Activated CD4-positive, alpha-beta T cell treated with anti-CD3 and anti-CD28 coated beads, Interleukin-2, amount 10 ng/mL, durations not matched to agents 24 days and 14 days (primary cell): ENCODE measurements at regions of chrX and their contacts with region 1.

Region 1: GRCh38 chrX:71618303-71618721 is at the start of gene CXCR3:
- DNase-seq: peak; percentile 91
- H3K4me3 Mint-ChIP-seq: peak within 1 kb of the TSS; percentile 94
- H3K27ac Mint-ChIP-seq: peak within 1 kb of the TSS; percentile 97
- H3K4me1 Mint-ChIP-seq: peaks cover 70% of the 10 kb centered on the region
- H3K27me3 Mint-ChIP-seq: no peaks in the 10 kb centered on the region
- total RNA-seq, gene CXCR3: 34.5 and 35.2 TPM in 2 replicates

Region 2: GRCh38 chrX:71365876-71366673 is 252.2 kb before region 1 on chrX and contains the start of gene TAF1:
- intact Hi-C with region 1: loop called (anchors 5 kb)
- DNase-seq: peak; percentile 96
- H3K4me3 Mint-ChIP-seq: peak within 1 kb of the TSS; percentile 98
- H3K27ac Mint-ChIP-seq: peak within 1 kb of the TSS; percentile 100
- H3K4me1 Mint-ChIP-seq: peaks cover 21% of the 10 kb centered on the region
- H3K27me3 Mint-ChIP-seq: no peaks in the 10 kb centered on the region
- total RNA-seq, gene TAF1: 46.7 and 47.8 TPM in 2 replicates

Region 3: GRCh38 chrX:71541210-71542022 is 76.9 kb before region 1 on chrX:
- intact Hi-C with region 1: loop called (anchors 1 kb)
- DNase-seq: peak; percentile 54
- H3K4me3 Mint-ChIP-seq: peak overlapping the region; percentile 100
- H3K27ac Mint-ChIP-seq: peak overlapping the region; percentile 95
- H3K4me1 Mint-ChIP-seq: peaks cover 41% of the 10 kb centered on the region
- H3K27me3 Mint-ChIP-seq: no peaks in the 10 kb centered on the region

Region 4: DNA sequence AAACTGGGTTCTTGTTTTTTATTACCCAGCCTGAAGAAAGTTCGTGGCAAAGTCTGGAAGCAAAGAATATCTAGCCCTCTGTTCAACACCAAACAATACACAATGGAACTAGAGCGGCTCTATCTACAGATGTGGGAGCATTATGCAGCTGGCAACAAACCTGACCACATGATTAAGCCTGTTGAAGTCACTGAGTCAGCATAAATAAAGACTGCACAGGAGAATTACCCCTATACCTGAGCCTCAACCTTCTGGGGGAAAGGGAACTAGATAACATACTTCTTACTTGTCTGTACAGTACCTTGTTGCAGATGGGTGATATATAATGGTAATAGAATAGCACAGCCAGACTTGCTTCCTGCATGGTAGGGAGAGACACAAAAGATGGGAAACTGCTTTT is 44.7 kb before region 1 on chrX:
- intact Hi-C with region 1: no loop called
- DNase-seq: no peak
- H3K4me3 Mint-ChIP-seq: no peak overlapping the region
- H3K27ac Mint-ChIP-seq: no peak overlapping the region
- H3K4me1 Mint-ChIP-seq: peaks cover 1% of the 10 kb centered on the region
- H3K27me3 Mint-ChIP-seq: no peaks in the 10 kb centered on the region

Region 5: GRCh38 chrX:71606536-71607216 is 11.6 kb before region 1 on chrX:
- intact Hi-C with region 1: loop called (anchors 1 kb)
- DNase-seq: peak; percentile 69
- H3K4me3 Mint-ChIP-seq: peak overlapping the region; percentile 39
- H3K27ac Mint-ChIP-seq: peak overlapping the region; percentile 71
- H3K4me1 Mint-ChIP-seq: peaks cover 40% of the 10 kb centered on the region
- H3K27me3 Mint-ChIP-seq: no peaks in the 10 kb centered on the region

Region 6: DNA sequence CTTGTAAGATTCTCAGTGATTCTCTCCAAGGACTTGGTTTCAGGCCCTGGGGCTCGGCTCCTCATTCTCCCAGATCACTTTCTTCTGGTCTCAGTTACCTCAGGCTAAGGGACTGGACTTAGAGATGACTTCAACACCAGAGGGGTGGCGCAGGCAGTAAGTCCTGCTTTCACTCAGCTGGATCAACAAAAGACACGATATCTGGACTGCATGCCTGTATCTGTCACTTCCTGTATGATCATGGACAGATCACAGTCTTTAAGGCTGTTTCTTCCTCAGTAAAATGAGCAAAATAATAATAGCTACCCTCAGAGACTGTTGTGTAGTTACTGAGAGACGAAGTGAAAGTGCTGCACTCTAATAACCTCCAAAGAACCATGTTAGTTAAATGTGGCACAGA is 19.5 kb after region 1 on chrX:
- intact Hi-C with region 1: loop called (anchors 1 kb)
- DNase-seq: no peak
- H3K4me3 Mint-ChIP-seq: no peak overlapping the region
- H3K27ac Mint-ChIP-seq: no peak overlapping the region
- H3K4me1 Mint-ChIP-seq: peaks cover 18% of the 10 kb centered on the region
- H3K27me3 Mint-ChIP-seq: no peaks in the 10 kb centered on the region

Region 7: GRCh38 chrX:71652405-71652804 is 34.1 kb after region 1 on chrX:
- intact Hi-C with region 1: loop called (anchors 1 kb)
- DNase-seq: peak; percentile 87
- H3K4me3 Mint-ChIP-seq: no peak overlapping the region
- H3K27ac Mint-ChIP-seq: no peak overlapping the region
- H3K4me1 Mint-ChIP-seq: peaks cover 18% of the 10 kb centered on the region
- H3K27me3 Mint-ChIP-seq: peaks cover 15% of the 10 kb centered on the region

Region 8: GRCh38 chrX:72018277-72019112 is 400.2 kb after region 1 on chrX:
- intact Hi-C with region 1: no loop called
- DNase-seq: peak; percentile 93
- H3K4me3 Mint-ChIP-seq: peak overlapping the region; percentile 37
- H3K27ac Mint-ChIP-seq: no peak overlapping the region
- H3K4me1 Mint-ChIP-seq: peaks cover 8% of the 10 kb centered on the region
- H3K27me3 Mint-ChIP-seq: peaks cover 39% of the 10 kb centered on the region